B cell (primary cell): ENCODE measurements at regions of chr17 and their contacts with region 1.

Region 1: DNA sequence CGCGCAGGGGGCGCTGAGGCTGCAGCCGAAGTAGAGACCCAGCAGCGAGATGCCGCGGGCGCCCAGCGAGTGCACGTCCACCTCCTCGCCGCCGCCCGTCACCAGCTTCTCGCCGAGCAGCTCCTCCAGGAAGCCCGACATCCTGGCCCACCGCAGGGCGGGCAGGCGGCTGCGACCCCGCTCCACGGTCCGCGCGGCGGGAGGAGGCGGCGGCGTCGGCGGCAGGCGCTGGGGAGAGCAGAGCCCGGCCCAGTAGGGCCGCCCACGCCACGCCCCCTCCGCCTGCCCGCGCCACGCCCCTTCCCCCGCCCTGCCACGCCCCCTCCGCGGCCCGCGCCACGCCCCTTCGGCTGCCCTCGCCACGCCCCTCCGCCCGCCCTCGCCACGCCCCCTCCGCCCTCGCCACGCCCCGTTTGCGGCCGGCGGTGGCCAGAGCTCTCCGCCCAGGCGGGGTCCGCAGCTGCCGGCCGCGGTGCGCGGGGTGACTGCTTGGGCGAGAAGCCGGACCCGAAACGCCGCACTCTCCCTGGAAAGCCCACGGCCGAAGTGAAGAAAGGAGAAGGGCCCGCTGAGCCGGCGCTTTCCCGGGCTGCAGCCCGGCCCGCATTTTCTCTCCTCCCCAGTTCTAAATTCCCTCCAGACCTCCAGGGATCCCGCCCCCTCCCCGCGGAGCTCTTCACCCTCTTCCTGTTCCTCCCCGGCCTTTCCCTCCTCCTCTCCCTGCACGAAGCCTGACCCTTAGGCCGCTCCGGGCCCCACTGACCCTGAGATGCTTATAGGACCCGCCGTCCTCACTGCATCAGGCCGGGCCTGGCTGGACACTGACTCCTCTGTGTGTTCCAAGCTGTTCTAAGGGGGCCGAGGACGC is at the start of gene NXN:
- DNase-seq: peak; percentile 90
- ATAC-seq: peak; percentile 88
- H3K4me3 ChIP-seq: peak within 1 kb of the TSS; percentile 8 to 67 (median 62)
- H3K4me3 Mint-ChIP-seq: peak within 1 kb of the TSS; percentile 87
- H3K27ac ChIP-seq: peak within 1 kb of the TSS in 1 of 2 donors; percentile 54
- H3K27ac Mint-ChIP-seq: peak within 1 kb of the TSS; percentile 80
- H3K4me1 ChIP-seq: peaks cover 23 to 28% of the 10 kb centered on the region in 2 donors
- H3K4me1 Mint-ChIP-seq: peaks cover 21% of the 10 kb centered on the region
- H3K27me3 ChIP-seq: peaks cover 0 to 33% (median 22%) of the 10 kb centered on the region in 4 experiments
- H3K27me3 Mint-ChIP-seq: peaks cover 23% of the 10 kb centered on the region
- CTCF ChIP-seq: no peak
- total RNA-seq, gene NXN: 0.17 TPM in 1 of 2 replicates, not detected in the other

Region 2: DNA sequence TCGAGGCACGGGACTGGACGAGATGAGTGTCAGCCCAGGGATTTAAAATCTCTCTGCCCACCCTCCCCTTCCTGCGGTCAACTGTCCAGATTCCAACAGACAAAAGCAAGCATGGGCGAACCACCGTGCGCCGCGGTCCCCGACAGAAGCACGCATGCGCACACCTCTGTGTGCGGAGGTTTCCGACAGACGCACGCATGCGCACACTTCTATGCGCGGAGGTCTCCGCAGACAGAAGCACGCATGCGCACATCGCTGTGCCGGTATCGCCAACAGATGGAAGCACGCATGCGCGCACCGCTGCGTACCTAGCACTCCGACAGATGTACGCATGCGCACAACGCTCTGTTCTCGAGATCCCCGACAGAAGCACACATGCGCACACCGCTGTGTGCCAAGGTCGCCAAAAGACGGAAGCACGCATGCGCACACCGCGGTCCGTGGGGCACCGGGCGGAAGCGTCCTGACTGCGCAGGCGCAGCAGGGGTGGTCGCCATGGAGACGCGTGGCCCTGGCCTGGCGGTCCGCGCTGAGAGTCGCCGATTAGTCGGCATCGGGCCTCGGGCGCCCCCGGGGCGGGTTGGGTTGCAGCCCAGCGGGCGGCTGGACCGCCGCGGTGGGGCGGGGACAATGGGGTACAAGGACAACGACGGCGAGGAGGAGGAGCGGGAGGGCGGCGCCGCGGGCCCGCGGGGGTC is 569.8 kb before region 1 on chr17:
- CTCF ChIA-PET with region 1: interaction called, 11 read pairs
- POLR2A ChIA-PET with region 1: interaction called, 4 read pairs
- intact Hi-C with region 1: no loop called
- DNase-seq: peak; percentile 100
- ATAC-seq: peak; percentile 82
- H3K4me3 ChIP-seq: peak overlapping the region; percentile 31 to 92 (median 75)
- H3K4me3 Mint-ChIP-seq: peak overlapping the region; percentile 92
- H3K27ac ChIP-seq: peak overlapping the region; percentile 61 to 88
- H3K27ac Mint-ChIP-seq: peak overlapping the region; percentile 97
- H3K4me1 ChIP-seq: peaks cover 20 to 22% of the 10 kb centered on the region in 2 donors
- H3K4me1 Mint-ChIP-seq: peaks cover 39% of the 10 kb centered on the region
- H3K27me3 ChIP-seq: peaks cover 0 to 6% (median 2%) of the 10 kb centered on the region in 4 experiments
- H3K27me3 Mint-ChIP-seq: peaks cover 9% of the 10 kb centered on the region
- CTCF ChIP-seq: no peak

Region 3: GRCh38 chr17:700504-701094 is 279.2 kb before region 1 on chr17:
- CTCF ChIA-PET with region 1: interaction called, 16 read pairs
- POLR2A ChIA-PET with region 1: no interaction called
- intact Hi-C with region 1: no loop called
- DNase-seq: peak; percentile 59
- ATAC-seq: no peak
- H3K4me3 ChIP-seq: no peak overlapping the region
- H3K4me3 Mint-ChIP-seq: no peak overlapping the region
- H3K27ac ChIP-seq: no peak overlapping the region
- H3K27ac Mint-ChIP-seq: no peak overlapping the region
- H3K4me1 ChIP-seq: no peaks in the 10 kb centered on the region
- H3K4me1 Mint-ChIP-seq: no peaks in the 10 kb centered on the region
- H3K27me3 ChIP-seq: no peaks in the 10 kb centered on the region
- H3K27me3 Mint-ChIP-seq: no peaks in the 10 kb centered on the region
- CTCF ChIP-seq: peak; percentile 83

Region 4: DNA sequence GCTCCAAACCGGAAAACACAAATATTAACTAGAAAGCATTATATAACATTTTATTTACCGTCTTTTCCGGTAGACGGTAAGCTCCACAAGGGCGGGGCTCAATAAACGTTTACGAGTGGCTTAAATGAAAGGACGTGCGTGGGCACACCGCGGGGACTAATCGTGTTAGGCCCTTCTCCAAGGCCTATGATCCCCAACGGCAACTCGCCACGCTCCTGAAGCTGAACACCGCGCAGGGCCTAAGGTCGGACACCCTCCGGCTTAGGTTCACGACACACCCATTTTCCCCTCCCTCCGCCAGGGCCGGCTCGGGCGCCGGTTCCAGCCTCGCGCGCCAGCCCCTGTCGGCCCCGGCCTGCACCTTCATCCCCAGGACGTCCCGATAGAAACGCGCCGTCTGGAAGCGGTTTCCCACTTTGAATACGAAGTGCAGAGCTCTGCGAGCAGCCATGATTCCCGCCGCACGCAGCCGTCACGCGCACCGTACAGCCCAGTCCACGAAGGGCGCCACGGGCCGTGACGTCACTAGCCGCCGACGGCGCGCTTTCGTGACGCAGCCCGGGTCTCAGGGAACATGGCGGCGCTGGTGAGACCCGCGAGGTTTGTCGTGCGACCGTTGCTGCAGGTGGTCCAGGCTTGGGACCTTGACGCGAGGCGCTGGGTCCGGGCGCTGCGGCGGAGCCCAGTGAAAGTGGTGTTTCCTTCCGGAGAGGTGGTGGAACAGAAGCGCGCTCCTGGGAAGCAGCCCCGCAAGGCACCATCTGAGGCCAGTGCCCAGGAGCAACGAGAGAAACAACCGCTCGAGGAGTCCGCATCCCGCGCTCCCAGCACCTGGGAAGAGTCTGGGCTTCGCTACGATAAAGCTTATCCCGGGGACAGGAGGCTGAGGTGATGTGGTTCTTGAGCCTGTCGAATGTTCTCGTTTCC is 197.7 kb before region 1 on chr17 and contains the starts of genes GLOD4 and MRM3:
- CTCF ChIA-PET with region 1: interaction called, 6 read pairs
- POLR2A ChIA-PET with region 1: no interaction called
- intact Hi-C with region 1: loop called (anchors 5 kb)
- DNase-seq: peak; percentile 96
- ATAC-seq: peak; percentile 95
- H3K4me3 ChIP-seq: peak within 1 kb of the TSS; percentile 79 to 100 (median 93)
- H3K4me3 Mint-ChIP-seq: peak within 1 kb of the TSS; percentile 97
- H3K27ac ChIP-seq: peak within 1 kb of the TSS; percentile 83 to 95
- H3K27ac Mint-ChIP-seq: peak within 1 kb of the TSS; percentile 97
- H3K4me1 ChIP-seq: peaks cover 16 to 20% of the 10 kb centered on the region in 2 donors
- H3K4me1 Mint-ChIP-seq: peaks cover 27% of the 10 kb centered on the region
- H3K27me3 ChIP-seq: no peaks in the 10 kb centered on the region
- H3K27me3 Mint-ChIP-seq: no peaks in the 10 kb centered on the region
- CTCF ChIP-seq: no peak
- total RNA-seq, gene GLOD4: 69.3 and 77.4 TPM in 2 replicates
- total RNA-seq, gene MRM3: 20.9 and 28.4 TPM in 2 replicates

Region 5: DNA sequence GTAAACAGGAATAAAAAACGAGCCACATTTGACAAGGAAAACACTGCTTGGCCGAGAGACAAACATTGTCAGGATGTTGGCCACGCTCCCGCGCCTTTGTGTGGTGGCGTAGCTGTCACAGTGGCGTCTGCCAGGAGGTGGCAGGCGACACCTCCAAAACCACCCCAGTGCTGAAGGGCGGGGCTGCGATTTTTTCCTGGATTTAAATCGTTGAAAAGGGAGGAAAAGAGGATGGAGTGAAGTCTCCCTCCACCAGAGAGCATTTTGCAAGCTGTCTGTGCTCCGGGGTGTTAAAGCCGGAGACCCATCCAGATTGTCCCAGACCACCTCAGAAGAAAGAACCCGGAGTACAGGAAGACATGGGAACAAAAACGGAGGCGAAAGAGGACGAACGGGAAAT is 184.9 kb before region 1 on chr17:
- CTCF ChIA-PET with region 1: interaction called, 17 read pairs
- POLR2A ChIA-PET with region 1: no interaction called
- intact Hi-C with region 1: no loop called
- DNase-seq: peak; percentile 62
- ATAC-seq: no peak
- H3K4me3 ChIP-seq: no peak overlapping the region
- H3K4me3 Mint-ChIP-seq: no peak overlapping the region
- H3K27ac ChIP-seq: no peak overlapping the region
- H3K27ac Mint-ChIP-seq: peak overlapping the region; percentile 37
- H3K4me1 ChIP-seq: peaks cover 0 to 8% of the 10 kb centered on the region in 2 donors
- H3K4me1 Mint-ChIP-seq: peaks cover 5% of the 10 kb centered on the region
- H3K27me3 ChIP-seq: no peaks in the 10 kb centered on the region
- H3K27me3 Mint-ChIP-seq: no peaks in the 10 kb centered on the region
- CTCF ChIP-seq: peak; percentile 71

Region 6: GRCh38 chr17:879549-880442 is 100.0 kb before region 1 on chr17:
- CTCF ChIA-PET with region 1: interaction called, 20 read pairs
- POLR2A ChIA-PET with region 1: no interaction called
- intact Hi-C with region 1: loop called (anchors 1 kb)
- DNase-seq: peak; percentile 78
- ATAC-seq: peak; percentile 53
- H3K4me3 ChIP-seq: no peak overlapping the region
- H3K4me3 Mint-ChIP-seq: no peak overlapping the region
- H3K27ac ChIP-seq: no peak overlapping the region
- H3K27ac Mint-ChIP-seq: no peak overlapping the region
- H3K4me1 ChIP-seq: no peaks in the 10 kb centered on the region
- H3K4me1 Mint-ChIP-seq: peaks cover 5% of the 10 kb centered on the region
- H3K27me3 ChIP-seq: peaks cover 0 to 6% (median 0%) of the 10 kb centered on the region in 4 experiments
- H3K27me3 Mint-ChIP-seq: peaks cover 27% of the 10 kb centered on the region
- CTCF ChIP-seq: peak; percentile 71